ENCODE measurements at regions of chr6 and their contacts with region 1.

Region 1: GRCh38 chr6:3848925-3849605 is at the start of gene FAM50B:
- DNase-seq: peak; percentile 85 to 92
- ATAC-seq: peak; percentile 87 to 91
- H3K4me3 ChIP-seq: peak within 1 kb of the TSS; percentile 58 to 68 (median 60)
- H3K27ac ChIP-seq: peak within 1 kb of the TSS; percentile 80 to 95 (median 89)
- H3K4me1 ChIP-seq: peaks cover 4 to 8% of the 10 kb centered on the region in 2 donors
- H3K27me3 ChIP-seq: no peaks in the 10 kb centered on the region
- CTCF ChIP-seq: peak; percentile 94 to 99 (median 97)
- POLR2A ChIP-seq: peak; percentile 10 to 61
- total RNA-seq, gene FAM50B: 4.4 to 19.6 (median 15.3) TPM

Region 2: GRCh38 chr6:3712827-3713665 is 136.0 kb before region 1 on chr6:
- in situ Hi-C with region 1: no loop called
- intact Hi-C with region 1: no loop called
- DNase-seq: no peak
- ATAC-seq: no peak
- H3K4me3 ChIP-seq: no peak overlapping the region
- H3K27ac ChIP-seq: no peak overlapping the region
- H3K4me1 ChIP-seq: no peaks in the 10 kb centered on the region
- H3K27me3 ChIP-seq: no peaks in the 10 kb centered on the region
- CTCF ChIP-seq: no peak
- POLR2A ChIP-seq: no peak

Region 3: GRCh38 chr6:3929281-3929798 is 80.3 kb after region 1 on chr6:
- in situ Hi-C with region 1: loop called in 1 of 4 experiments (anchors 10 kb)
- intact Hi-C with region 1: loop called (anchors 1 kb)
- DNase-seq: no peak
- ATAC-seq: peak in 1 of 2 donors; percentile 10
- H3K4me3 ChIP-seq: no peak overlapping the region
- H3K27ac ChIP-seq: peak overlapping the region; percentile 54 to 74 (median 65)
- H3K4me1 ChIP-seq: peaks cover 16 to 20% of the 10 kb centered on the region in 2 donors
- H3K27me3 ChIP-seq: no peaks in the 10 kb centered on the region
- CTCF ChIP-seq: no peak
- POLR2A ChIP-seq: no peak

Region 4: DNA sequence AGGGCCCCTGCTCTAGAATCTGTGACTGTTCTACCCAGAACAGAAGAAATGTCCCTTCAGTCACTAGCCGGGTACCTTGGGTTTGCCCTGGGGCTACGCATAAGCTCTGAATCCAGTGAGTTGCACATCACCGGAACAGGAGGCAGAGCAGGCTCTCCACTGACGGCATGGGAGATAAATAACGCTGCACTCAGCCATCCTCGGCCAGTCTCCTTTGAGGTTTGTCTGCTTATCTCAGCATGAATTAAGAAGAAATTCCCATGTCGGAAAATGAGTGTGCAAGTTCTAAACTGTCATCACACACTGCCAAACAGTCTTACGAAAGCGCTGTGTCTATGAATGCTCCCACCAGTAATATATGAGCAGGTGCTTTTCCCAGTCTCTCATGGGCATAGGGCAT is 90.9 kb after region 1 on chr6:
- in situ Hi-C with region 1: loop called in 1 of 4 experiments (anchors 10 kb)
- intact Hi-C with region 1: no loop called
- DNase-seq: no peak
- ATAC-seq: no peak
- H3K4me3 ChIP-seq: no peak overlapping the region
- H3K27ac ChIP-seq: no peak overlapping the region
- H3K4me1 ChIP-seq: no peaks in the 10 kb centered on the region
- H3K27me3 ChIP-seq: peaks cover 0 to 7% (median 6%) of the 10 kb centered on the region in 3 donors
- CTCF ChIP-seq: no peak
- POLR2A ChIP-seq: no peak